ENCODE measurements at regions of chr7 and their contacts with region 1.

Region 1: GRCh38 chr7:100632951-100633717 is 8.2 kb downstream of the TFR2 start:
- DNase-seq: peak in 1 of 2 experiments; percentile 73
- H3K4me3 ChIP-seq: peak overlapping the region; percentile 65
- H3K27ac ChIP-seq: no peak overlapping the region
- H3K4me1 ChIP-seq: no peaks in the 10 kb centered on the region
- H3K27me3 ChIP-seq: no peaks in the 10 kb centered on the region
- CTCF ChIP-seq: peak; percentile 68

Region 2: DNA sequence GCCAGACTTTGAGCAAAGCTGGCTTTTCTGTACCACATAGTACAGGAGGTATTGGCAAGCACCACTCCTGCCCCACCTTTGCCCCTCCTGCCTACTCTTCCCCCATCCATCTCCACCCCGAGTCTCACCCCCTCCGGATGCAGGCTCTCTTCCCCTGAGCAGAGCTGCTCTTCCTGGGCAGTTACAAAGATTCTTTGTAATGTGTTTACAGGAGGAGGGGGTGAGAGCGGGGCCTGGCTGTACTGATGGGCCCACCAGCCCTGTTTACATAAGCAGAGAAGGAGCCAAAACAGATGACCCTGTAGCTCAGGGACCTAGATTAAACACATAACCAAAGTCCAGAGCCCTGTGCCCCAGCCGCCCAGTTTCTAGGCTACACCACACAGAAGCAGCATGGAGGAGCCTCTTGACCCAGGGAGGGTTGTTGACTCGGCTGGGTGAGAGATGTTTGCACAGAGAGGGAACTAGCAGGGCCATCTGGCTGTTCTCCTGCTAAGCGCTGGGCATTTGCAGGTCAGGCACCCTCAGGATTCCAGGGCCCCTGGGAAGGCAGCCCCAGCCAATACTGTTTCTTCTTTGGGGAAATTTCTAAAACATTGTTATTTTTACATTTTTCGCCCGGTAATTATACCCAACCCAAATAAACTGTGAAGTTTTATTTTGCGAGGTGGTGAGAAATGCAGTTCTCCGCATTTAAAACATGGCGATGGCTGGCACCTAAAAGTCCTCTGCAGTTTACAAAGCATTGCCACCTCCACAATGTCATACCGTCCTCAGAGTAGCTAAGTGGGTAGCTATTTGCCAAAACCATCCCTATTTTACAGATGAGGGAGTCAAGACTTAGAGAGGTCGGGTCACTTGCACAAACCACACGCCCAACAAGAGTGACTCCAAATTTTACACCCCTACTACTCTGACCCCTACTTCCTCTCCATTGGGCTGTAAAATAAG is 629.1 kb before region 1 on chr7:
- CTCF ChIA-PET with region 1: no interaction called
- POLR2A ChIA-PET with region 1: no interaction called
- intact Hi-C with region 1: no loop called
- DNase-seq: no peak
- H3K4me3 ChIP-seq: no peak overlapping the region
- H3K27ac ChIP-seq: no peak overlapping the region
- H3K4me1 ChIP-seq: 0 out of 2 replicates have a peak, but pooled peaks cover 7% of the 10 kb centered on the region
- H3K27me3 ChIP-seq: peaks cover 9% of the 10 kb centered on the region
- CTCF ChIP-seq: no peak

Region 3: GRCh38 chr7:100568896-100569844 is 64.0 kb before region 1 on chr7:
- CTCF ChIA-PET with region 1: interaction called, 17 read pairs
- POLR2A ChIA-PET with region 1: no interaction called
- intact Hi-C with region 1: no loop called
- DNase-seq: no peak
- H3K4me3 ChIP-seq: no peak overlapping the region
- H3K27ac ChIP-seq: no peak overlapping the region
- H3K4me1 ChIP-seq: no peaks in the 10 kb centered on the region
- H3K27me3 ChIP-seq: no peaks in the 10 kb centered on the region
- CTCF ChIP-seq: no peak

Region 4: DNA sequence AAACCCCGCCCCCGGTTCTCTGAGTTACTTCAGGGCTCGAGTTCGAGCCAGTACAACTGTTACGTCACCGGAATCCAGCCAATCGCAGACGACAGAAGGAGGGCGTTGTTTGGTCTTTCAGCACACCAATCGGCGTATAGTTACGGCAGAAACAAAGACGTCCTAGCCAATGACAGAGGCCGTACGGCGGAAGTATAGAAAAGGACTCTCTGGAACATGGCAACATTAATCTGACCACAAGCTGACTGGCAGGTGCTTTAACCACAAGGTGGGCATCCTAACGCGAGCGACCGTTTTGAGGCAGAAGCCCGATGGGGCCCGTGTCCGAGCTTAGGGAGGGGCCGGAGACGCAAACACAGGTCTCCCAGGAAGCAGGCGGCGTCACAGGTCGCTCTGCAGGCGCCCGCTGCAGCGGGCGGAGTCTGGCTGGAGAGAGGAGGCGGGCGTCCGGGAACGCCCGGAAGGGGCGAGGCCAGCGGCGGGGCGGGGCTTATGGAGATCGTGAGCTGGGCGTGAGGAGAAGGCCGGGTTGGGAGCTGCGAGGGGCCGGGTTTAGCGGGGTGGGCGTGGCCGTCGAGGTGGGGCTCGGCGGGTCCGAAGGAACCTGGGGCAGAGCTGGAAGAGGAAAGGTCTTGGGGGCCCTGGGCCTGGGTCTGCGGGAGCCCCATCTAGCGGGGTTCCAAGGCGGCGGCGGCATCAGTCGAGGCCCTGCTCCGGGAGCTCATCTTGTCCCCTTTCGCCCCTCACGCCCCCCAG is 21.0 kb before region 1 on chr7 and contains the start of gene MOSPD3:
- CTCF ChIA-PET with region 1: interaction called, 7 read pairs
- POLR2A ChIA-PET with region 1: interaction called, 14 read pairs
- intact Hi-C with region 1: no loop called
- DNase-seq: peak; percentile 98 to 99
- H3K4me3 ChIP-seq: peak within 1 kb of the TSS; percentile 74
- H3K27ac ChIP-seq: peak within 1 kb of the TSS; percentile 60
- H3K4me1 ChIP-seq: peaks cover 5% of the 10 kb centered on the region
- H3K27me3 ChIP-seq: no peaks in the 10 kb centered on the region
- CTCF ChIP-seq: no peak
- total RNA-seq, gene MOSPD3: 38.1 and 38.8 TPM in 2 replicates

Region 5: DNA sequence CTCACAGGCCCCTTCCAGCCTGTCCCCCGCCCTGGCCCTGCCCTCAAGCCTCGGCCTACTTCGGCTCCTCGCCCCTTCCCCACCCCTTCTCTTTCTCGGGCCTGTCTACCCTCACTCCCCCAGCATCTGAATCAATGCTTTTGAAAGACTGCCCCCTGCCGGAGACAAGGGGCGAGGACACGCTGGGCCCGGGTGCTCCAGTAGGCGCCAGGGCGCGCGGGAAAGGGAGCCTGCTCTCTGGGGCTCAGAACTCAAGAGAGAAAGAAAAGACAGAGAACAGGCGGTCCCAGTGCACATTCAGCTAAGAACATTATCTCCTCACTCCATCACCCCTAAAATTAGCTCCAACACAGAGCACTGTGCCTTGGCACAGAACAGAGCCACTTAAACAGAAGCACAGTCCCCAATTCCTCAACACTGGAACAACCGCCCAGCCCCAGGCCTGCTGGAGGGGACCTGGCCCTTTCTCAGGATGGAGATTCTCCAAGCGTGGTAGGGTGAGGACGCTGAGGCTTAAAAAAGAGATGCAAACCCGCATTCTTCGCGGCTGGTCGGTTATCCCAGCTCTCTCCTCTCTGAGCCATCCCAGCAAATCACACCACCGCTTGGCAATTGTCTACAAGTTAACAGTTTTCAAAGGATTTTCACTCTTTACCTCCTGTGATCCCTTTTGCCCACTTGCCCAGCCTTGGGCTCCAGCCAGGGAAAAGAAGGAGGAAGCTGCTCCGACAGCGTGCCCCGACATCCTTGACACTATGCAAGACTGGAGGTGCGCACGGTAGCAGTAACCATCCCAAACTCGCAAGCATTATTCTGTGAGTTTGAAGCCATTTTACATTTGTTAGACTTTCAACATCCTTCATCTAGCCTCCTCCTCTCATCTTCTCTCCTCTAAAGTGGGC is 58.8 kb after region 1 on chr7:
- CTCF ChIA-PET with region 1: interaction called, 9 read pairs
- POLR2A ChIA-PET with region 1: interaction called, 14 read pairs
- intact Hi-C with region 1: no loop called
- DNase-seq: peak in 1 of 2 experiments; percentile 72
- H3K4me3 ChIP-seq: peak overlapping the region; percentile 97; the same call in 1 of the 2 replicates
- H3K27ac ChIP-seq: no peak overlapping the region
- H3K4me1 ChIP-seq: peaks cover 13% of the 10 kb centered on the region
- H3K27me3 ChIP-seq: no peaks in the 10 kb centered on the region
- CTCF ChIP-seq: peak; percentile 95

Measured in PC-9 (cell line).